ENCODE measurements at regions of chr22 and their contacts with region 1.

Region 1: DNA sequence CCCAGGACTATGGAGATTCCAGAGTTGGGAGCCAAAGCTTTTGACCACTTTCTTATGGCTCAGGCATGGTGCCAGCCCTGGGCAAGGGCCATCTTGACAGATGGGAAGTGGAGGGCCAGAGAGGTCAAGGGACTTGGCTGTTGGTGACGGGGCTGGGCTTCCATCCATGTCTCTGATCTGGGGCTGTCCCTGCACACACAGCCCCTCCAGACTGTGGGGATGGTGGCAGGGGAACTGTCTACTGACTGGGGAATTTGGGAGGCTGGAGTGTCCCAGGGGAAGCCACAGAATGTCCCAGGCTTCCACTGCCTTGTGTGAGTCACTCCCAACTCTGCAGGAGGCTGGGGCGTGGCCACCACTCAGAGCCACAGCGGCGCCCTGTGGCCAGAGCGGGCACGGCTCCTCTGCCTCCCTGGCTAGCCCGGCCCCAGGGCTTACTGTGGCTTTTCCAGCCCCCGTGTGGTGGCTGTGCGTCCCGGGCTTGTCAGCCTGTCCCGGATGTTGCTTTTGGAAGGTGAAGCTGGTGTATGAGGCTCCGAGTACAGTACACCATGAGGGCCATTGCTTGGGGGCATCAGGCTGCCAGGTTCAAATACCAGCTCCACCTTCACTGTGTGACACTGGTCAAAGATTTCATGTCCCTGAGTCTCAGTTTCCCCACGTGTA is 19.6 kb downstream of the C22orf23 start:
- DNase-seq: peak; percentile 83
- ATAC-seq: peak; percentile 99
- H3K4me3 ChIP-seq: no peak overlapping the region
- H3K4me3 Mint-ChIP-seq: no peak overlapping the region
- H3K27ac ChIP-seq: no peak overlapping the region
- H3K27ac Mint-ChIP-seq: no peak overlapping the region
- H3K4me1 ChIP-seq: peaks cover 3 to 12% of the 10 kb centered on the region in 2 donors
- H3K4me1 Mint-ChIP-seq: peaks cover 19% of the 10 kb centered on the region
- H3K27me3 ChIP-seq: no peaks in the 10 kb centered on the region
- H3K27me3 Mint-ChIP-seq: no peaks in the 10 kb centered on the region
- CTCF ChIP-seq: peak; percentile 86

Region 2: DNA sequence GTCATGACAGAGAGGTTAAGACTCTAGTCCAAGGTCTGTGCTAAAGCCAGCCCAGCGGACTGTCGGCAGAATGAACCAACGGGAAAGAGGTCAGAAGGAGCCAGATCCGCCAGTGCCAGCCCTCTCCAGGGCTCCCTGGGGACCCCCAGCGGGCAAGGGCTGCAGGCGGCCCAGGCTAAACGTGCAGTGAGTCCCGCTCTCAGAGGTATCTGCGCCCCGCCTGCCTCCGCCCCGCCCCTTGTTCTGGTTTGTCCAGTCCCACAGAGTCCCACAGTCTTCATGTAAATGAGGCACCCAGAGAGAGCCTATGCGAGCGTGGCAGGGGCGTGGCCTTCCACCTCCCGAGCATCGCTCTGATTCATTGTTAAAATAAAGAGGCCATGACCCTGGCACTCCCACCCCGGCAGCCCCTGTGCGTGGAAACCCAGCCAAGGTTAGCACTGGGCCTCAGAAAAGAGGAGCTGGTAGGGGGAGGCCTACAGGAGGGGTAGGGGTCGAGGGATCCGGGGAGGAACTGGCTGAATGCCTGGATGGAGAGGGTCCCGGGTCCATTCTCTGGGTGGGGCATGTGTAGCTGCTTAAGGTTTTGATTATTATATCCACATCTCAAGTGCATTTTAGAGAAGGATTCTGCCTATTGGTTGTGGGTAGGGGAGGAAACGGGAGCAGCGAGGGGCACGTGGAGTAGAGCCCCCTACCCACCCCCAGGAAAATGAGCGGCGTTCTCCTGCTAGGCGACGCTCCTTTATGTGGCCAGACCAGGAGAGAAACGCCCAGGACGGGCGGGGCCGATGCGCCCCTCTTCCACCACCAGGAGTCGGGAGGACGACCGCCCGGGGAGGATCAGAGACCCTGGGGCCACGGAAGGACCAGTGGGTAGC is 236.9 kb before region 1 on chr22 and contains the start of gene TRIOBP:
- CTCF ChIA-PET with region 1: no interaction called
- POLR2A ChIA-PET with region 1: interaction called, 10 read pairs
- intact Hi-C with region 1: no loop called
- DNase-seq: peak; percentile 85
- ATAC-seq: peak; percentile 99
- H3K4me3 ChIP-seq: peak within 1 kb of the TSS in 4 of 5 experiments; percentile 6 to 34 (median 24)
- H3K4me3 Mint-ChIP-seq: peak within 1 kb of the TSS; percentile 72
- H3K27ac ChIP-seq: no peak within 1 kb of the TSS
- H3K27ac Mint-ChIP-seq: peak within 1 kb of the TSS; percentile 37
- H3K4me1 ChIP-seq: peaks cover 9 to 17% of the 10 kb centered on the region in 2 donors
- H3K4me1 Mint-ChIP-seq: peaks cover 11% of the 10 kb centered on the region
- H3K27me3 ChIP-seq: no peaks in the 10 kb centered on the region
- H3K27me3 Mint-ChIP-seq: no peaks in the 10 kb centered on the region
- CTCF ChIP-seq: peak; percentile 35
- total RNA-seq, gene TRIOBP: 47.2 and 47.5 TPM in 2 replicates

Region 3: DNA sequence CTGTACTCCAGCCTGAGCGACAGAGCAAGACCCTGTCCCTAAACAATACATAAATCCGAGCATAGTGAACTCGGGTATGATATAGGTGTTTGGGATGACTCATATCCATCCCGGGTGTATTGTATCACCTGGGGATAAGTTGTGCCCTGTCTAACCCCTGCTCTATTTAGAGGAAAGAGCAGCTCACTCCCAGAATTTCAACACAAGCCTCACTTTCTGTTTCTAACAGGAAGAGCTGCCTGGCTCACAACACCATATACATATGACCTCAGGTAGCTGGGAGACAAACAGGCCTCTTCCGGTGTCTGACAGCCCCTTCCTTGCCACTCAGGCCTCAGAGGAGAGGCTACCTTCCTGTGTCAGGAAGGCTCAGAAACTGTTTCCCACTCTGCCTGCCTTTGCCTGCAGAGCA is 37.7 kb before region 1 on chr22:
- CTCF ChIA-PET with region 1: interaction called, 8 read pairs
- POLR2A ChIA-PET with region 1: no interaction called
- intact Hi-C with region 1: loop called (anchors 5 kb)
- DNase-seq: peak; percentile 68
- ATAC-seq: peak; percentile 82
- H3K4me3 ChIP-seq: peak overlapping the region in 2 of 5 experiments; percentile 21 to 37
- H3K4me3 Mint-ChIP-seq: peak overlapping the region; percentile 30
- H3K27ac ChIP-seq: peak overlapping the region; percentile 76 to 83
- H3K27ac Mint-ChIP-seq: peak overlapping the region; percentile 91
- H3K4me1 ChIP-seq: peaks cover 11 to 19% of the 10 kb centered on the region in 2 donors
- H3K4me1 Mint-ChIP-seq: peaks cover 10% of the 10 kb centered on the region
- H3K27me3 ChIP-seq: no peaks in the 10 kb centered on the region
- H3K27me3 Mint-ChIP-seq: no peaks in the 10 kb centered on the region
- CTCF ChIP-seq: no peak

Region 4: GRCh38 chr22:37905534-37906363 is 28.1 kb before region 1 on chr22 and contains the start of gene MICALL1:
- CTCF ChIA-PET with region 1: interaction called, 28 read pairs
- POLR2A ChIA-PET with region 1: no interaction called
- intact Hi-C with region 1: loop called (anchors 1 kb)
- DNase-seq: peak; percentile 85
- ATAC-seq: peak; percentile 93
- H3K4me3 ChIP-seq: peak within 1 kb of the TSS in 4 of 5 experiments; percentile 36 to 86 (median 58)
- H3K4me3 Mint-ChIP-seq: peak within 1 kb of the TSS; percentile 86
- H3K27ac ChIP-seq: peak within 1 kb of the TSS in 1 of 2 donors; percentile 73
- H3K27ac Mint-ChIP-seq: peak within 1 kb of the TSS; percentile 86
- H3K4me1 ChIP-seq: peaks cover 10 to 16% of the 10 kb centered on the region in 2 donors
- H3K4me1 Mint-ChIP-seq: peaks cover 28% of the 10 kb centered on the region
- H3K27me3 ChIP-seq: no peaks in the 10 kb centered on the region
- H3K27me3 Mint-ChIP-seq: no peaks in the 10 kb centered on the region
- CTCF ChIP-seq: no peak
- total RNA-seq, gene MICALL1: 34.6 and 34.9 TPM in 2 replicates

Region 5: DNA sequence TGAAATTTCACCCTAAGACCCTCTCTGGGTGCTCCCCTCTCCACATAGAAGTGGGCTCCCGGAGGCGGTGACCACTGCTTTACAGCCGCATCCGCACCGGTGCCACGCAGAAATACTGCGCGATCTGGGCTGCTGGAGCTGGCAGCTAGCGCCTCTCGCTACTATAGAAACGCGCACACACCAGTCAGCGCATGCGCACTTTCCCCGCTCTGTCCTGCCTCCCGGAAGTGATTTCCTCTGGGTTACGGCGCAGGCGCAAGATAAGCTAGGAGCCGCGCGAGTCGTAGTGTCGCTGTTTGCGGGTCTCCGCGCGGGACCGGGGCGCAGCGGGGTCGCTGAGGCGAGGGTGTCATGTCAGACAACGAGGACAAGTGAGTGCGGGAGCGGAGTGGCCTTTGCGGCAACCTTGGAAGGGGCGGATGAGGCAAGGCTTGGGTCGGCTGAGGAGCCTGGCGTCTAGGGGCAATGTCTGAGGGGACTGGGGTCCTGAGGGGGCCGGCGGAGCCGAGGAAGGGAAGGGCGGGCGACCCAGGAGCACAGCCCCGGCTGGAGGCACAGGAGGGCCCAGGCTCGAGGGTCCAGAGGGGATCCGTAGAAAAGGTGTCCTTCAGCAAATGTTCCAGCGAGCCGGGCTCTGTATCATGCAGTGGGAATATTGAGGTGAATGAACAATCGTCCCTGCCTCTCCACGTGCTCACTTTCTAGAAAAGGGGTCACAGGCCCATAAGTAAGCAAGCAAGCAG is 19.8 kb after region 1 on chr22 and contains the starts of genes C22orf23 and POLR2F:
- CTCF ChIA-PET with region 1: interaction called, 3 read pairs
- POLR2A ChIA-PET with region 1: interaction called, 4 read pairs
- intact Hi-C with region 1: loop called (anchors 2 kb)
- DNase-seq: peak; percentile 97
- ATAC-seq: peak; percentile 94
- H3K4me3 ChIP-seq: peak within 1 kb of the TSS; percentile 64 to 99 (median 88)
- H3K4me3 Mint-ChIP-seq: peak within 1 kb of the TSS; percentile 99
- H3K27ac ChIP-seq: peak within 1 kb of the TSS; percentile 24 to 76
- H3K27ac Mint-ChIP-seq: peak within 1 kb of the TSS; percentile 97
- H3K4me1 ChIP-seq: peaks cover 17 to 20% of the 10 kb centered on the region in 2 donors
- H3K4me1 Mint-ChIP-seq: peaks cover 26% of the 10 kb centered on the region
- H3K27me3 ChIP-seq: peaks cover 2 to 14% (median 8%) of the 10 kb centered on the region in 4 experiments
- H3K27me3 Mint-ChIP-seq: peaks cover 14% of the 10 kb centered on the region
- CTCF ChIP-seq: no peak
- total RNA-seq, gene C22orf23: not detected in 2 replicates
- total RNA-seq, gene POLR2F: 39.3 and 41.8 TPM in 2 replicates

Region 6: DNA sequence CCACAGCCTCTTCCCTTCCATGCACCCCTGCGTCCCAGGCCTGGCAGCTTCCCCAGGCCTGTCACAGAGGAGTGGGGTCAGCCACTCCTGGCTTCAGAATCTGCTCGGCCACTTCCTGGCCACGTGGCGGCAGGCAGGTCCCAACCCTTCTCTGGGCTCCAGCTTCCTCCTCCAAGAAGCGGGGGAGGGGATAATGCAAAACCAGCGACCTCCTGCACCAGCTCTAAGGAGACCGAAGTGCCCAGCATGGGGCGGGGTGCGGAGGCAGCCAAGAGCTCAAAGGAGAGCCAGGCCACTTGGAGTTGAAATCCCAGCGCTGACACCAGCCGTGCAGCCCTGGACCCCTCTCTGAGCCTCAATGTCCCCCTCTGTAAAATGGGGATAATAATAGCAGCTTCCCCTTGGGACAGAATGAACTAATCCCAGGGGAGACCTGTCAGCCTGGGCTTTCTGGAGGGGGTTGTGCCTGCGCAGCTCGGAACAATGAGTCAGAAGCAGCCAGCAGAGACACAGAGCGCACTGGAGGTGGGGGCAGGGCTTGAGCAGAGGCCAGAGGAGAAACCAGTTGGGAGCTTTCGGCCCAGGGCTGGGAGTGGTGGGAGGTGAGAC is 100.5 kb after region 1 on chr22:
- CTCF ChIA-PET with region 1: no interaction called
- POLR2A ChIA-PET with region 1: no interaction called
- intact Hi-C with region 1: no loop called
- DNase-seq: no peak
- ATAC-seq: no peak
- H3K4me3 ChIP-seq: no peak overlapping the region
- H3K4me3 Mint-ChIP-seq: no peak overlapping the region
- H3K27ac ChIP-seq: no peak overlapping the region
- H3K27ac Mint-ChIP-seq: no peak overlapping the region
- H3K4me1 ChIP-seq: no peaks in the 10 kb centered on the region
- H3K4me1 Mint-ChIP-seq: no peaks in the 10 kb centered on the region
- H3K27me3 ChIP-seq: no peaks in the 10 kb centered on the region
- H3K27me3 Mint-ChIP-seq: peaks cover 7% of the 10 kb centered on the region
- CTCF ChIP-seq: no peak

Region 7: DNA sequence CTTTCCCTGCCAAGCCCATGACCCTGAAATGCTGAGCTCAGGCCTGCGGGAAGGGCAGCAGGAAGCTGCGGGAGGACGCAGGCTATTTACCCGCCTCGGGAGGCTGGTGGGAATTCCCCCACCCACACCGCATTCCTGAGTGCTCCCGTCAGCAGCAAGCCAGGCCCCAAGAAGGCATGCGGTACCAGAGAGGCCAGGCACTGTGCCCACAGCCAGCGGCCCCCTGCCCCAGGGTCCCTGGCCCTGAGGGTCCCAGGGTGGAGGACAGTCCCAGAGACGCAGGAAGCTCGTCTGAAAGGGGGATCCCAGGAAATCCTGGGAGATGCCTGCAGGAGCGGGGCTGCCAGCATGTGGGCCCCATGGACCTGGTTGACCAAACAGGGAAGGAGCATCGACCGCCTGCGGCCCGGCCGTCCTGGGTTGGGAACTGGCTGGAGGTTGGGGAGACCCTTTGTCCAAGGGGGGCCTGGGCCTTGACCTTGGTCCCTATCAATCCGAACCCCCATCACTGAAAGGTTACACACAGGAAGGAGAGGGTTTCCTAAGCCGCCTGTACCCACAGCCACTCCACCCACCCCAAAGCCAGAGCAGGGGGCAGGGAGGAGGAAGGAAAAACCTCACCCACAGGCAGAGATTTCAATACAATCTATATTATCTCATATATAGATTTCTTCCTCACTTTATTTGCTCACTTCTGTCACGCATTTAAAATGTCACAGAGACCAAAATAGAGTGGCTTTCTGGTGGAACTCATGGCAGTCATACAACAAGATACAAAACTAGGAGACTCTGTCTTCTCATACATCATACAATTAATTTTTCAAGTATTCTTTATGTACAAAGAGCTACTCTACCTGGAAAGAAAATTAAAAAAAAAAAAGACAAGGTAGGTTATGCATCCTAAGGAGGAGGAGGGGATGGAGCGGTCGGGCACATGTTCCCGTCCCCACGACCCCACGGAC is 285.1 kb after region 1 on chr22:
- CTCF ChIA-PET with region 1: no interaction called
- POLR2A ChIA-PET with region 1: no interaction called
- intact Hi-C with region 1: no loop called
- DNase-seq: no peak
- ATAC-seq: no peak
- H3K4me3 ChIP-seq: no peak overlapping the region
- H3K4me3 Mint-ChIP-seq: no peak overlapping the region
- H3K27ac ChIP-seq: no peak overlapping the region
- H3K27ac Mint-ChIP-seq: no peak overlapping the region
- H3K4me1 ChIP-seq: peaks cover 3 to 9% of the 10 kb centered on the region in 2 donors
- H3K4me1 Mint-ChIP-seq: peaks cover 9% of the 10 kb centered on the region
- H3K27me3 ChIP-seq: no peaks in the 10 kb centered on the region
- H3K27me3 Mint-ChIP-seq: no peaks in the 10 kb centered on the region
- CTCF ChIP-seq: no peak

Measured in B cell (primary cell).